Activated T-helper 1 cell treated with anti-CD3 and anti-CD28 coated beads, Interleukin-12 subunit alpha, Interleukin-12 subunit beta, Interleukin-2, Interleukin-4 antibody, amounts not matched to agents 30 ng/mL and 10 ng/mL and 1 ng/mL, durations not matched to agents 14 hours and 24 hours and 36 hours (primary cell): ENCODE measurements at regions of chr7 and their contacts with region 1.

Region 1: DNA sequence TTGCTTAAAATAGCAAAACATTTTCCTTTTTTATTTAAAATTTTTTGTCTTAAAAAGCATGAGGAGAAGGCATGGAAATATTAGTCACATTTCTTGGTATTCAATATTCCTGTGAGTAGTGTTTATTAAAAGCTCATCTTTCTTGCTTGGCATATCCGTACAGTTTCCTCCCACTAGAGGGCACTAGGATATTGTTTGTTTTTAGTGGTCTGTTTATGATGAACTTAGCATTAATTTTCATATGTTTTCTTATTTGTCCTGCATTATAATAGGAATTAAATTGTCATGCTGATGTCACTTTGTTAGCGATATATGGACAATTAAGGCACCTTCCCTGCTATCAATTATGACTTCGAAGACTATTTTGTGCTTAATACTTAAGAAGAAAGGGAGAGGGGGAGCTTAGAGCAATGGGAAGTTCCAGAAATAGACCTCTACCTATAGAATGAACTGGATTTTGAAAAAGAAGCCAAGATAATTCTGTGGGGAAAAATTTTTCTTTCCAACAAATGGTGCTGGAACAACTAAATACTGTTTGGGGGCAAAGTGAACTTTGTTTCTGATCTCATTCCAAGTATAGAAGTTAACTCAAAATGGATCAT is 91.0 kb upstream of the STRIP2 start:
- DNase-seq: no peak
- H3K4me3 Mint-ChIP-seq: no peak overlapping the region
- H3K27ac Mint-ChIP-seq: no peak overlapping the region
- H3K4me1 Mint-ChIP-seq: peaks cover 42% of the 10 kb centered on the region
- H3K27me3 Mint-ChIP-seq: no peaks in the 10 kb centered on the region

Region 2: DNA sequence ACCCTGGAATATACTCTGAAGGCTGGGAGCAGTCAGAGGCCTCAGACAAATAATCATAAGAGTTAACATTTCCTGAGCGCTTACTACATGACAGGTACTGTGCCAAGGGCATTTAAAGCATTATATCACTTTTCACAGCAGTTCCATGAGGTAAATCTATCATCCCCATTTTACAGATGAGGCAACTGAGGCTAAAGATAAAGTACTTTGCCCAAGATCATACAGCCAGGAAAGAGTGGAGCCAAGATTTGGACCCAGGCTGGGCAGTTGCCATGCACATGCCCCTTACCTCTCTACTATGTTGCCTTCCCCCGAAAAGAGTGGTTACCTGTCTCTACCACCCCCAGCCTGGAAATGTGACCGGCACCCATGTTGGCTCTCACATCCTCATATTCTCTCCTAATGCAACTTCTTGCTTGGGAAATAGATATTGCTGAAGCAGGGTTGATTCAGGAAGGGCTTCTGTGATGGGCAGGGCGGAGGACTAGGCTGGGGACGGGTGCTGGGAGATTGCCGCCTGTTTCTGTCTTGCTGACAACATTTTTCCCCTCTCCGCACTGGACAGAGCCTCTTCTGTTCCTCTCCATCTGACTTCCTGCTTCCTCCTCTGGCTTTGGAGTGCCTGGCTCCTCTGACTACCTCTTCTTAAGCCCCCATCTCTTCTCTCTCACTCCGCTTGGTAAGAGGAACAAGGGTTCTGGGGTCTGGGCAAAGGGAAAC is 141.0 kb before region 1 on chr7:
- intact Hi-C with region 1: no loop called
- DNase-seq: no peak
- H3K4me3 Mint-ChIP-seq: no peak overlapping the region
- H3K27ac Mint-ChIP-seq: no peak overlapping the region
- H3K4me1 Mint-ChIP-seq: no peaks in the 10 kb centered on the region
- H3K27me3 Mint-ChIP-seq: peaks cover 13% of the 10 kb centered on the region

Region 3: GRCh38 chr7:129367700-129368388 is 24.6 kb after region 1 on chr7:
- intact Hi-C with region 1: loop called (anchors 1 kb)
- DNase-seq: peak; percentile 68
- H3K4me3 Mint-ChIP-seq: peak overlapping the region; percentile 73
- H3K27ac Mint-ChIP-seq: peak overlapping the region; percentile 88
- H3K4me1 Mint-ChIP-seq: peaks cover 58% of the 10 kb centered on the region
- H3K27me3 Mint-ChIP-seq: no peaks in the 10 kb centered on the region

Region 4: GRCh38 chr7:129401967-129402860 is 59.0 kb after region 1 on chr7:
- intact Hi-C with region 1: loop called (anchors 1 kb)
- DNase-seq: peak; percentile 2
- H3K4me3 Mint-ChIP-seq: no peak overlapping the region
- H3K27ac Mint-ChIP-seq: peak overlapping the region; percentile 0
- H3K4me1 Mint-ChIP-seq: peaks cover 44% of the 10 kb centered on the region
- H3K27me3 Mint-ChIP-seq: no peaks in the 10 kb centered on the region

Region 5: GRCh38 chr7:129494041-129494440 is 150.8 kb after region 1 on chr7:
- intact Hi-C with region 1: loop called (anchors 1 kb)
- DNase-seq: peak; percentile 24
- H3K4me3 Mint-ChIP-seq: no peak overlapping the region
- H3K27ac Mint-ChIP-seq: peak overlapping the region; percentile 85
- H3K4me1 Mint-ChIP-seq: peaks cover 29% of the 10 kb centered on the region
- H3K27me3 Mint-ChIP-seq: no peaks in the 10 kb centered on the region

Region 6: DNA sequence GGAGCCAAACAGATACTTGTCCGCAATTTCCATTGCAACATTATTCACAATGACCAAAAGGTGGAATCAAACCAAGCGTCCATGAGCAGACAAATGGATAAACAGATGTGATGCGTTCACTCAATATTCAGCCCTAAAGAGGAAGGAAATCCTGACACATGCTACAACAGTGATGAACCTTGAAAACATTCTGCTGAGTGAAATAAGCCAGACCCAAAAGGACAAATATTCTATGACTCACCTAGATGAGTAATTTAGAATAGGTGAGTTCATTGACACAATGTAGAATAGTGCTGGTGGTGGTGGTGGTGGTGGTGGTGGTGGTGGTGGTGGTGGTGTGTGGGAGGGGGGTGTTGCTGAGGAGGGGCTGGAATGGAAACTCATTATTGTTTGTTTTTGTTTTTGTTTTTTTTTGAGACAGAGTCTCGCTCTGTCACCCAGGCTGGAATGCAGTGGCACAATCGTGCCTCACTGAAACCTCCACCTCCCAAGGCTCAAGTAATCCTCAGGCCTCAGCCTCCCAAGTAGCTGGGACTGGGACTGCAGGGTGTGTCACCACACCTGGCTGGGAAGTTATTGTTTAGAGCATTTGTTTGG is 187.7 kb after region 1 on chr7:
- intact Hi-C with region 1: loop called (anchors 1 kb)
- DNase-seq: peak; percentile 8
- H3K4me3 Mint-ChIP-seq: no peak overlapping the region
- H3K27ac Mint-ChIP-seq: peak overlapping the region; percentile 79
- H3K4me1 Mint-ChIP-seq: peaks cover 12% of the 10 kb centered on the region
- H3K27me3 Mint-ChIP-seq: no peaks in the 10 kb centered on the region

Region 7: GRCh38 chr7:129644634-129645230 is 301.5 kb after region 1 on chr7:
- intact Hi-C with region 1: loop called (anchors 2 kb)
- DNase-seq: no peak
- H3K4me3 Mint-ChIP-seq: no peak overlapping the region
- H3K27ac Mint-ChIP-seq: no peak overlapping the region
- H3K4me1 Mint-ChIP-seq: peaks cover 10% of the 10 kb centered on the region
- H3K27me3 Mint-ChIP-seq: no peaks in the 10 kb centered on the region